Naive thymus-derived CD4-positive, alpha-beta T cell (primary cell): ENCODE measurements at regions of chr16 and their contacts with region 1.

Region 1: DNA sequence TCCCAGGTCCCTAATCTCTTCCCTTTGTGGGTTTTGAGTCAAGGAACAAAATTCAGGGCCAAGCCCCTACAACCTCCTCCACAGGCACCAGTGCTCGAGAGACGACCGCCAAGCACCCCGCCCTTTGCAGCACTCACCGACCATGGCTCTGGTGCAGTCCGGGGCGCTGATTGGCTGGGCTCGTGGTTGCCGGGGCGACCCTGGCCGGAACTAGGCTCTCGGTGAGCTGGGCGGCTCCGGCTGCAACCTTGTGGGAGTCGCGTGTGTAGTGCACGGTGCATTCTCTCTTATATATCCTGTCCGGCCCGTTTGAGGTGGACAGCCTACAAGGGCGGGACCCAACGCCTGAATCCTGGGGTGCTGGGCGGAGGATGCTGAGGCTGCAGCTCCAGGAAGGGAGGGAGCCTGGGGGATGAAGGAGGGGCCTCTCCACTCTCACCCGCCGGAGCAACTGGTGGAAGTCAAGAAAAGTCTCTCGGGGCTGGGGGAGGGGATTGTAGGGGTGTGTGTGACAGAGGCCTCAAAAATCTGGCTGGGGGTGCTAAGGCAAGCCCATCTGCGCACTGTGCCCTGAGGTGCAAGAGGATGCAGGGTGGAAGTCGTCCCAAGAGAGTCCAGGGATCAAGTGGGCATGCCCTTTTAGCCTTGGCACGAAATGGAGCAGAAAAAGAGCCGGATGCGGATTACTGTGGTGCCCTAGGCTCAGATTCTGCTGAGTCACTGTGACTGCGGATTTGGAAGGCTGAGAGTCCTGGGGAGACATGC is at the start of gene NQO1:
- DNase-seq: peak; percentile 62 to 90 (median 78)
- ATAC-seq: peak; percentile 98
- H3K4me3 ChIP-seq: peak within 1 kb of the TSS; percentile 79
- H3K4me3 Mint-ChIP-seq: peak within 1 kb of the TSS; percentile 86 to 96 (median 95)
- H3K27ac ChIP-seq: peak within 1 kb of the TSS; percentile 57
- H3K27ac Mint-ChIP-seq: peak within 1 kb of the TSS; percentile 72 to 95 (median 86)
- H3K4me1 ChIP-seq: peaks cover 10 to 18% of the 10 kb centered on the region in 2 donors
- H3K4me1 Mint-ChIP-seq: peaks cover 15 to 57% (median 27%) of the 10 kb centered on the region in 7 donors
- H3K27me3 ChIP-seq: no peaks in the 10 kb centered on the region
- H3K27me3 Mint-ChIP-seq: no peaks in the 10 kb centered on the region
- total RNA-seq, gene NQO1: 1.7 to 27.3 (median 3.2) TPM

Region 2: DNA sequence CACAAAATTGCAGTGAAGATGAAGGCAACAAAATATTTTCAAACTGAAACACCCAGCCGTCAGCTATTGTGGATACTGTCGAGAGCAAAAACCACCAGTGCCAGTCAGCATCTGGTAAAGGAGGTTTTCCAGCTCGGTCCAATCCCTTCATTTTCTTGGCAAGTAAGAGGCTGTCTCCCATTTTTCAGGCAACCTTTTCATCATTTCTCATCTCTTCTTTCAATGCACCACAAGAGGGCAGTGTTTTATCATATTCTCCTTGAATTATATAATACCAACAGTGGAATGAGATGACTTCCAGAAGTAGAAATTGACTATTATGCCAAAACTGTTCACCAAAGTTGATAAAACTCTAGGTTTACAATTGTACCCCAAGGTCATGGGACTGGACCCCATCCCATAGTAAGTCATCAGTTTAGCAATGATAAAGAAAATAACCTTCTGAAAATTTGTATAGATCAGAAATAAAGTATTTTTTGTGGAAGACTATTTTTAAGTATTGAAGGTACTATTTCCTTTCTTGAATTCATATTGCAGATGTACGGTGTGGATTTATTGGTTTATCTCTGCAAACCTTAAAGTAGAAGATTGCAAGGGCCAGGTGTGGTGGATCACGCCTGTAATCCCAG is 16.9 kb before region 1 on chr16:
- CTCF ChIA-PET with region 1: interaction called, 4 read pairs
- POLR2A ChIA-PET with region 1: interaction called, 3 read pairs
- intact Hi-C with region 1: loop called (anchors 1 kb)
- DNase-seq: peak in 7 of 9 donors; percentile 35 to 67 (median 59)
- ATAC-seq: peak; percentile 78
- H3K4me3 ChIP-seq: no peak overlapping the region
- H3K4me3 Mint-ChIP-seq: no peak overlapping the region
- H3K27ac ChIP-seq: no peak overlapping the region
- H3K27ac Mint-ChIP-seq: peak overlapping the region in 6 of 9 donors; percentile 16 to 61 (median 56)
- H3K4me1 ChIP-seq: no peaks in the 10 kb centered on the region
- H3K4me1 Mint-ChIP-seq: peaks cover 0 to 6% (median 0%) of the 10 kb centered on the region in 7 donors
- H3K27me3 ChIP-seq: no peaks in the 10 kb centered on the region
- H3K27me3 Mint-ChIP-seq: no peaks in the 10 kb centered on the region

Region 3: DNA sequence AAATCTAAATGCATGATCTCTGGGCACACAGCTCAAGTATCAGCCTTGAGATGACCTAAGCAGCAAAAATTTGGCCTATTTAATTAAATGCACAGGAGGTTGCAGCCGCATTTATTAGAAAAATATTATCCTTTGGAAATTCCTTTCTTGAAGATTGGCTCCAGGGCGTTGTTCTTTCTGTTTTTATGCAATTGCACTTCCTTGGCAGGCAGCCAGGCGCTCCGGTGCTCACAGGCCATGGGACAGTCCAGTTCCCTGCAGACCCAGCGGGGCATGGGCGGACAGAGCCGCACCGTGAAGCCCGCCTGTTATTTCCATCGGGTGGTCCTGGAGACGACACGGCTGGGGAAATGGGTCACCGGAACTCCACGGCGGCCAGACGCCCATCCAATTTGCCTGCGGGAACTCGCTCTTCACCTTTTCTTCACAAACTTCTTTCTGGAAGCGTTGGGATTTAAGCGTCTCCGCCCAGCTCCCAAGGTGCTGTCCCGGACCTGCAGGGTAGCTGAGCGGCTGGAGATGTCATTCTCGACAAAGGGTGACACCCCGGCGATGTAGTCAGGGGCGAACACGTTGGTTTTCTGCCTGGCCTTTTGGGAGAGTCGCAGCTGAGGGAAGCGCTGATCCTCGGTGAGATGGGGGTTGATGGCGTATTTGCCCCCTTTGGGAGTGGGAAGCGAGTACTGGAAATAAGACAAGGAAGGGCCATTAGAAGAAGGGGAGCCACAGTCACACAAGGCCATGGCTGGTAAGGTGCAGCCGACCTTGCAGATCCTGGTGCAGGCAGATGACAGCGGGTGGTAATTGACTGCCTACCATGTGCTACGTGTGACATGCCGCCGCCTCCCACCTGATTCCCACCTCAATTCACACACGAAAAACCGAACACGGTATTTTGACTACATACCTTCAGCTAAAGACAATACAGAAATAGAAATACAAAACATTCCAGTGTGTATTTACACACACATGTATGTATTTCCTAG is 15.7 kb after region 1 on chr16:
- CTCF ChIA-PET with region 1: no interaction called
- POLR2A ChIA-PET with region 1: no interaction called
- intact Hi-C with region 1: loop called in 1 of 2 experiments (anchors 2 kb)
- DNase-seq: no peak
- ATAC-seq: no peak
- H3K4me3 ChIP-seq: no peak overlapping the region
- H3K4me3 Mint-ChIP-seq: no peak overlapping the region
- H3K27ac ChIP-seq: no peak overlapping the region
- H3K27ac Mint-ChIP-seq: no peak overlapping the region
- H3K4me1 ChIP-seq: no peaks in the 10 kb centered on the region
- H3K4me1 Mint-ChIP-seq: peaks cover 0 to 8% (median 0%) of the 10 kb centered on the region in 7 donors
- H3K27me3 ChIP-seq: no peaks in the 10 kb centered on the region
- H3K27me3 Mint-ChIP-seq: no peaks in the 10 kb centered on the region

Region 4: GRCh38 chr16:69761983-69762813 is 35.7 kb after region 1 on chr16 and contains the start of gene WWP2:
- CTCF ChIA-PET with region 1: no interaction called
- POLR2A ChIA-PET with region 1: interaction called, 17 read pairs
- intact Hi-C with region 1: loop called in 1 of 2 experiments (anchors 2 kb)
- DNase-seq: peak; percentile 68 to 81 (median 77)
- ATAC-seq: peak; percentile 86
- H3K4me3 ChIP-seq: peak within 1 kb of the TSS; percentile 88
- H3K4me3 Mint-ChIP-seq: peak within 1 kb of the TSS; percentile 77 to 96 (median 94)
- H3K27ac ChIP-seq: peak within 1 kb of the TSS; percentile 92
- H3K27ac Mint-ChIP-seq: peak within 1 kb of the TSS; percentile 93 to 99 (median 98)
- H3K4me1 ChIP-seq: peaks cover 10 to 14% of the 10 kb centered on the region in 2 donors
- H3K4me1 Mint-ChIP-seq: peaks cover 16 to 47% (median 37%) of the 10 kb centered on the region in 7 donors
- H3K27me3 ChIP-seq: no peaks in the 10 kb centered on the region
- H3K27me3 Mint-ChIP-seq: peaks cover 0 to 5% (median 0%) of the 10 kb centered on the region in 5 donors
- total RNA-seq, gene WWP2: 58.4 to 81.3 (median 72.1) TPM

Region 5: DNA sequence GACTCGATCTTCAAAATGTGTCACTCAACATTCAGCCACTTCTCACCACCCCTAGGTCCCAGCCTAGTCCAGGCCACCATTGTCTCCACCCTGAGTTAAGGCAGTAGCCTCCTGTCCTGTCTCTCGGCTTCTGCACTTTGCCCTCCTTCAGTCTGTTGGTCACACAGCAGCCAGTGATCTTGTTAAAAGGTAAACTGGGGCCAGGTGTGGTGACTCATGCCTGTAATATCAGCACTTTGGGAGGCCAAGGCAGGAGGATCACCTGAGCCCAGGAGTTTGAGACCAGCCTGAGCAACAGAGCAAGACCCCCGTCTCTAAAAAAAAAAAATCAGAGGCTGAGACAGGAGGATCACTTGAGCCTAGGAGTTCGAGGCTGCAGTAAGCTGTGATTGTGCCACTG is 61.4 kb after region 1 on chr16:
- CTCF ChIA-PET with region 1: no interaction called
- POLR2A ChIA-PET with region 1: no interaction called
- intact Hi-C with region 1: no loop called
- DNase-seq: no peak
- ATAC-seq: no peak
- H3K4me3 ChIP-seq: no peak overlapping the region
- H3K4me3 Mint-ChIP-seq: no peak overlapping the region
- H3K27ac ChIP-seq: no peak overlapping the region
- H3K27ac Mint-ChIP-seq: peak overlapping the region in 1 of 9 donors; percentile 16
- H3K4me1 ChIP-seq: no peaks in the 10 kb centered on the region
- H3K4me1 Mint-ChIP-seq: peaks cover 0 to 9% (median 0%) of the 10 kb centered on the region in 7 donors
- H3K27me3 ChIP-seq: no peaks in the 10 kb centered on the region
- H3K27me3 Mint-ChIP-seq: no peaks in the 10 kb centered on the region

Region 6: DNA sequence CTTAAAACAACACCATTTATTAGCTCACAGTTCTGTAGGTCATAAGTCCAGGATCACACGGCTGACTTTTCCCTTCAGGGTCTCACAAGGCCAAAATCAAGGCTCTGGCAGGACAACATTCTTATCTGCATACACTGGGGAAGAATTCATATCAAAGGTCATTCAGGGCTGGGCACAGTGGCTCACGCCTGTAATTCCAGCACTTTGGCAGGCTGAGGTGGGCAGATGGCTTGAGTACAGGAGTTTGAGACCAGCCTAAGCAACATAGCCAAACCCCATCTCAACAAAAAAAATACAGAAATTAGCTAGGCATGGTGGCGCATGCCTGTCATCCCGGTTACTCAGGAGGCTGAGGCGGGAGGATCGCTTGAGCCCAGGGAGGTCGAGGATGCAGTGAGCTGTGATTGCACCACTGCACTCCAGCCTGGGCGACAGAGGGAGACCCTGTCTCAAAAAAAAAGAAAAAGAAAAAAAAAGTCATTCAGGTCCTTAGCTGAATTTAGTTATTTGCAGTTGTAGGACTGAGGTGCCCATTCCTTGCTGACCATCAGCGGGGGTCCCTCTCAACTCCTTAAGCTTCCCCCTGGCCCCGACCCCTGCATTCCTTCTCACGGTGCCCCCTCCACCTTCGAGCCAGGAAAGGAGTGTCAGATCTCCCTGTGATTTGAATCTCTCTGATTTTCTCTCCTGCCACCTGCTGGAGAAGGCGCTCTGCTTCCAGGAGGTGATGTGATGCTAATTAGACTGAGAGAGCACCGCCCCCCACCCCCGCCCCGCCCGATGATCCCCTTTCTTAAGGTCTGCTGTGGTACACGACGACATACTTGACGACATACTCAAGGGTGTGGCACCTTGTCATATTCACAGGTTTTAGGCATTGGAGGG is 132.9 kb after region 1 on chr16:
- CTCF ChIA-PET with region 1: no interaction called
- POLR2A ChIA-PET with region 1: no interaction called
- intact Hi-C with region 1: loop called in 1 of 2 experiments (anchors 10 kb)
- DNase-seq: no peak
- ATAC-seq: no peak
- H3K4me3 ChIP-seq: no peak overlapping the region
- H3K4me3 Mint-ChIP-seq: no peak overlapping the region
- H3K27ac ChIP-seq: no peak overlapping the region
- H3K27ac Mint-ChIP-seq: peak overlapping the region in 3 of 9 donors; percentile 22 to 85 (median 43)
- H3K4me1 ChIP-seq: no peaks in the 10 kb centered on the region
- H3K4me1 Mint-ChIP-seq: peaks cover 0 to 15% (median 10%) of the 10 kb centered on the region in 7 donors
- H3K27me3 ChIP-seq: no peaks in the 10 kb centered on the region
- H3K27me3 Mint-ChIP-seq: no peaks in the 10 kb centered on the region